Heart left ventricle (tissue), 16 donors: ENCODE measurements at regions of chr6 and their contacts with region 1.

Region 1: GRCh38 chr6:105263685-105264610 is 84.1 kb upstream of the POPDC3 start:
- DNase-seq: no peak
- ATAC-seq: no peak
- H3K4me3 ChIP-seq: no peak overlapping the region
- H3K27ac ChIP-seq: no peak overlapping the region
- H3K4me1 ChIP-seq: peaks cover 0 to 19% (median 1%) of the 10 kb centered on the region in 12 donors
- H3K27me3 ChIP-seq: no peaks in the 10 kb centered on the region
- CTCF ChIP-seq: no peak
- POLR2A ChIP-seq: no peak

Region 2: GRCh38 chr6:105179244-105180065 is 84.5 kb before region 1 on chr6 and contains the start of gene POPDC3:
- intact Hi-C with region 1: loop called in 1 of 10 experiments (anchors 10 kb)
- DNase-seq: peak; percentile 25 to 65 (median 49)
- ATAC-seq: peak; percentile 77 to 83 (median 82)
- H3K4me3 ChIP-seq: peak within 1 kb of the TSS; percentile 28 to 69 (median 61)
- H3K27ac ChIP-seq: peak within 1 kb of the TSS; percentile 76 to 95 (median 88)
- H3K4me1 ChIP-seq: peaks cover 0 to 12% (median 0%) of the 10 kb centered on the region in 12 donors
- H3K27me3 ChIP-seq: peaks cover 0 to 68% (median 18%) of the 10 kb centered on the region in 9 donors
- CTCF ChIP-seq: no peak
- POLR2A ChIP-seq: no peak
- total RNA-seq, gene POPDC3: 29.3 to 59.7 (median 51.5) TPM

Region 3: DNA sequence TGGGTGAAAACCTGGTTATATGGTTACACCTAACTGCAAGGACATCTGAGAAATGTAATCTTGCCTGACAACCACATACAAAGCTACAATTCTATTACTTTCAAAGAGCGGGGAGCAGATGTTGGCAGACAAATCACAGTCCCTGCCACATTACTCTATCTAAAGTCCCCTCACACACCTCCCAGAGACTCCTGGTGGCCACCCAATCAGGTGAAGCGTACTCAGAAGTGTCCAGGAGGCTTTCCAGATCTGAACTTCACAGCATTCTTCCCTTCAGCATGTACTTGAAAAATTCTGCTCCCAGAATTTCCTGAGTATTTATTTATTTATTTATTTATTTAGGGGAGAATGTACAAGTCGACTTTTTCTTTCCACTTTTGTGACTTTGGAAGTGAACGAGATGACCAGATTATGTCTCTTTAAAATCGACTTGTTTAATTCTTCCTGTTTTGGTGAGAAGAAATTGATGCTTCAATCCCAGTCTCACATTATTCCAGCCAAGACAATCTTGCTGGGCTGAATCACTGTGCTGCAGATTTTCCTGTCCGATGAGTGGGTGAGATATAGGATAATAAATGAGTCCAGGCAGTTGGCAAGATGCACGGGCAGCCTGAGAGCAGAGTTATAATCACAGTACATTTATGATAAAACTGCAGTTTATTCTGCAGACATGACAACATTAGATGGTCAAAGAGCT is 37.2 kb before region 1 on chr6:
- intact Hi-C with region 1: loop called in 1 of 10 experiments (anchors 1 kb)
- DNase-seq: peak in 1 of 5 donors; percentile 55
- ATAC-seq: peak in 3 of 4 donors; percentile 62 to 87 (median 77)
- H3K4me3 ChIP-seq: no peak overlapping the region
- H3K27ac ChIP-seq: peak overlapping the region in 4 of 12 donors; percentile 11 to 46 (median 42)
- H3K4me1 ChIP-seq: peaks cover 0 to 15% (median 0%) of the 10 kb centered on the region in 12 donors
- H3K27me3 ChIP-seq: no peaks in the 10 kb centered on the region
- CTCF ChIP-seq: no peak
- POLR2A ChIP-seq: no peak